CD4-positive, alpha-beta memory T cell (primary cell): ENCODE measurements at regions of chr13 and their contacts with region 1.

Region 1: GRCh38 chr13:79423801-79424642 is 18.0 kb upstream of the RBM26 start:
- DNase-seq: peak in 4 of 5 donors; percentile 37 to 44 (median 44)
- H3K4me3 ChIP-seq: no peak overlapping the region
- H3K4me3 Mint-ChIP-seq: no peak overlapping the region
- H3K27ac ChIP-seq: no peak overlapping the region
- H3K27ac Mint-ChIP-seq: no peak overlapping the region
- H3K4me1 ChIP-seq: no peaks in the 10 kb centered on the region
- H3K4me1 Mint-ChIP-seq: peaks cover 0 to 2% (median under 1%) of the 10 kb centered on the region in 4 donors
- H3K27me3 ChIP-seq: no peaks in the 10 kb centered on the region
- H3K27me3 Mint-ChIP-seq: no peaks in the 10 kb centered on the region

Region 2: GRCh38 chr13:79246578-79246949 is 177.5 kb before region 1 on chr13:
- CTCF ChIA-PET with region 1: no interaction called
- POLR2A ChIA-PET with region 1: no interaction called
- intact Hi-C with region 1: no loop called
- DNase-seq: no peak
- H3K4me3 ChIP-seq: no peak overlapping the region
- H3K4me3 Mint-ChIP-seq: no peak overlapping the region
- H3K27ac ChIP-seq: no peak overlapping the region
- H3K27ac Mint-ChIP-seq: no peak overlapping the region
- H3K4me1 ChIP-seq: no peaks in the 10 kb centered on the region
- H3K4me1 Mint-ChIP-seq: no peaks in the 10 kb centered on the region
- H3K27me3 ChIP-seq: no peaks in the 10 kb centered on the region
- H3K27me3 Mint-ChIP-seq: peaks cover 0 to 2% of the 10 kb centered on the region in 2 donors

Region 3: DNA sequence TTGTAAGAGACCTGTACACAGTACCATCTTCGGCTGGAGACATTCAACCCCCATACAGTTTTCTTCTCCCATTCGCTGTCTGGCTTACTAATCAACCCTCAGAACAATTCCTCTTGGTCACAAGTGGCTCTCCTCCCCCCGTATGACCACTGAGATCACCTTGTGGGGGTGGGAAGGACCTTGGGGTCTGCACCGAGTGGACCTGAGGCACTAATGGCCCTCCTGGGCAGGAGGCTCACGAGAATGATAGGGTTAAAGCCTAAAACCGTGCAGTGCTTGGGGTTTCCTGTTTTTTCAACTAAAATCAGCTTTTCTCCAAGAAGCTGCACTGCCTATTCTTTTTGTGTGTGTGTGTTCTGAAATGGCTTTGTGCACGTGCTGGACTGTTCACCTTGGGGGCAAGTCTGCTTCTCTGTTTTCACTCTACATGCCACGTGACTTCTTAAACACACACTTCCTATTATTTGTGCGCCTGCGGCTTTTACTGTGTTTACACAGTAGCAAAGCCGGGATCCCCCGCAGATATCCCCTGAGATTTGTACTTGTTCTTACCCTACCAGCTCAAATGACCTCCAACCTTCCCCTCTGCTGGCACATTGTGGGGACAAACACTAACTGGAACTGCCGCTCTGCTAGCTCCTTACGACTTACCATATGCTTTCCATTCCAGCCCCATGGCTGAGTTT is 30.3 kb before region 1 on chr13:
- CTCF ChIA-PET with region 1: interaction called, 10 read pairs
- POLR2A ChIA-PET with region 1: no interaction called
- intact Hi-C with region 1: no loop called
- DNase-seq: peak; percentile 40 to 61 (median 49)
- H3K4me3 ChIP-seq: peak overlapping the region; percentile 25 to 35
- H3K4me3 Mint-ChIP-seq: peak overlapping the region; percentile 75 to 88 (median 82)
- H3K27ac ChIP-seq: peak overlapping the region; percentile 40
- H3K27ac Mint-ChIP-seq: peak overlapping the region; percentile 87 to 93 (median 90)
- H3K4me1 ChIP-seq: peaks cover 62% of the 10 kb centered on the region
- H3K4me1 Mint-ChIP-seq: peaks cover 44 to 64% (median 56%) of the 10 kb centered on the region in 4 donors
- H3K27me3 ChIP-seq: no peaks in the 10 kb centered on the region
- H3K27me3 Mint-ChIP-seq: no peaks in the 10 kb centered on the region

Region 4: GRCh38 chr13:79434556-79434955 is 10.5 kb after region 1 on chr13:
- CTCF ChIA-PET with region 1: interaction called, 19 read pairs
- POLR2A ChIA-PET with region 1: no interaction called
- intact Hi-C with region 1: no loop called
- DNase-seq: no peak
- H3K4me3 ChIP-seq: no peak overlapping the region
- H3K4me3 Mint-ChIP-seq: no peak overlapping the region
- H3K27ac ChIP-seq: no peak overlapping the region
- H3K27ac Mint-ChIP-seq: no peak overlapping the region
- H3K4me1 ChIP-seq: no peaks in the 10 kb centered on the region
- H3K4me1 Mint-ChIP-seq: no peaks in the 10 kb centered on the region
- H3K27me3 ChIP-seq: no peaks in the 10 kb centered on the region
- H3K27me3 Mint-ChIP-seq: peaks cover 0 to 2% of the 10 kb centered on the region in 2 donors

Region 5: GRCh38 chr13:79457948-79458347 is 33.9 kb after region 1 on chr13:
- CTCF ChIA-PET with region 1: interaction called, 12 read pairs
- POLR2A ChIA-PET with region 1: no interaction called
- intact Hi-C with region 1: no loop called
- DNase-seq: peak in 1 of 5 donors; percentile 59
- H3K4me3 ChIP-seq: no peak overlapping the region
- H3K4me3 Mint-ChIP-seq: peak overlapping the region in 1 of 8 donors; percentile 30
- H3K27ac ChIP-seq: no peak overlapping the region
- H3K27ac Mint-ChIP-seq: peak overlapping the region in 4 of 7 donors; percentile 13 to 68 (median 53)
- H3K4me1 ChIP-seq: peaks cover 8% of the 10 kb centered on the region
- H3K4me1 Mint-ChIP-seq: peaks cover 4 to 12% (median 7%) of the 10 kb centered on the region in 4 donors
- H3K27me3 ChIP-seq: no peaks in the 10 kb centered on the region
- H3K27me3 Mint-ChIP-seq: no peaks in the 10 kb centered on the region

Region 6: GRCh38 chr13:79528759-79529191 is 104.8 kb after region 1 on chr13:
- CTCF ChIA-PET with region 1: interaction called, 266 read pairs
- POLR2A ChIA-PET with region 1: no interaction called
- intact Hi-C with region 1: no loop called
- DNase-seq: no peak
- H3K4me3 ChIP-seq: no peak overlapping the region
- H3K4me3 Mint-ChIP-seq: no peak overlapping the region
- H3K27ac ChIP-seq: no peak overlapping the region
- H3K27ac Mint-ChIP-seq: no peak overlapping the region
- H3K4me1 ChIP-seq: no peaks in the 10 kb centered on the region
- H3K4me1 Mint-ChIP-seq: peaks cover 2 to 14% (median 7%) of the 10 kb centered on the region in 4 donors
- H3K27me3 ChIP-seq: no peaks in the 10 kb centered on the region
- H3K27me3 Mint-ChIP-seq: no peaks in the 10 kb centered on the region

Region 7: DNA sequence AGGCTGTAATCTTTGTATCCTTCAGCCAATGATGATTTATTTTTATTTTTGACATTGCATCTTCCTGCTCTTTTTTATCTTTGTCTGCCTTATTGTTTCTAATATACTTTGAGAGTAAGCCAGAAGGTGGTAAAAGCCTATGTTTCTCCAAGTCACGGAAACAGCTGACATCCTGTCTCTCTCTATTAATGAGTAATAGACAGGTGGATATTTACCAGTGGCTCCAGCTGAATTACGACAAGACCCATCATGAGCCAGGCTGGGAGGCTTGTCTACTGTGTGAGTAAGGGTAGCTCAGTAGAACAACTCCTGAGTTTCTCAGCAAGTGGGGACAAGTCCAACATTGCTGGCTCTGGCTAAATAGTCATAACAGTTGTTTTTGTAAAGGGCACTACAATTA is 223.5 kb after region 1 on chr13:
- CTCF ChIA-PET with region 1: no interaction called
- POLR2A ChIA-PET with region 1: no interaction called
- intact Hi-C with region 1: no loop called
- DNase-seq: no peak
- H3K4me3 ChIP-seq: no peak overlapping the region
- H3K4me3 Mint-ChIP-seq: no peak overlapping the region
- H3K27ac ChIP-seq: no peak overlapping the region
- H3K27ac Mint-ChIP-seq: no peak overlapping the region
- H3K4me1 ChIP-seq: no peaks in the 10 kb centered on the region
- H3K4me1 Mint-ChIP-seq: no peaks in the 10 kb centered on the region
- H3K27me3 ChIP-seq: no peaks in the 10 kb centered on the region
- H3K27me3 Mint-ChIP-seq: peaks cover 2 to 9% of the 10 kb centered on the region in 2 donors